CD4-positive, alpha-beta memory T cell (primary cell): ENCODE measurements at regions of chr19 and their contacts with region 1.

Region 1: GRCh38 chr19:55258828-55259539 is at the start of gene PPP6R1:
- DNase-seq: peak; percentile 94 to 98 (median 96)
- H3K4me3 ChIP-seq: peak within 1 kb of the TSS; percentile 79 to 92
- H3K4me3 Mint-ChIP-seq: peak within 1 kb of the TSS; percentile 93 to 100 (median 98)
- H3K27ac ChIP-seq: peak within 1 kb of the TSS; percentile 92
- H3K27ac Mint-ChIP-seq: peak within 1 kb of the TSS; percentile 97 to 100 (median 99)
- H3K4me1 ChIP-seq: peaks cover 44% of the 10 kb centered on the region
- H3K4me1 Mint-ChIP-seq: peaks cover 23 to 50% (median 38%) of the 10 kb centered on the region in 4 donors
- H3K27me3 ChIP-seq: no peaks in the 10 kb centered on the region
- H3K27me3 Mint-ChIP-seq: peaks cover 0 to 2% of the 10 kb centered on the region in 2 donors
- total RNA-seq, gene PPP6R1: 161 to 162 TPM

Region 2: GRCh38 chr19:54364775-54365257 is 894.2 kb before region 1 on chr19 and contains the start of gene LAIR1:
- CTCF ChIA-PET with region 1: no interaction called
- POLR2A ChIA-PET with region 1: no interaction called
- intact Hi-C with region 1: no loop called
- DNase-seq: peak in 4 of 5 donors; percentile 38 to 55 (median 39)
- H3K4me3 ChIP-seq: peak within 1 kb of the TSS; percentile 36 to 55
- H3K4me3 Mint-ChIP-seq: peak within 1 kb of the TSS; percentile 83 to 91 (median 89)
- H3K27ac ChIP-seq: peak within 1 kb of the TSS; percentile 42
- H3K27ac Mint-ChIP-seq: peak within 1 kb of the TSS; percentile 86 to 94 (median 91)
- H3K4me1 ChIP-seq: peaks cover 76% of the 10 kb centered on the region
- H3K4me1 Mint-ChIP-seq: peaks cover 48 to 87% (median 69%) of the 10 kb centered on the region in 4 donors
- H3K27me3 ChIP-seq: no peaks in the 10 kb centered on the region
- H3K27me3 Mint-ChIP-seq: no peaks in the 10 kb centered on the region
- total RNA-seq, gene LAIR1: 57.6 to 59.8 TPM

Region 3: DNA sequence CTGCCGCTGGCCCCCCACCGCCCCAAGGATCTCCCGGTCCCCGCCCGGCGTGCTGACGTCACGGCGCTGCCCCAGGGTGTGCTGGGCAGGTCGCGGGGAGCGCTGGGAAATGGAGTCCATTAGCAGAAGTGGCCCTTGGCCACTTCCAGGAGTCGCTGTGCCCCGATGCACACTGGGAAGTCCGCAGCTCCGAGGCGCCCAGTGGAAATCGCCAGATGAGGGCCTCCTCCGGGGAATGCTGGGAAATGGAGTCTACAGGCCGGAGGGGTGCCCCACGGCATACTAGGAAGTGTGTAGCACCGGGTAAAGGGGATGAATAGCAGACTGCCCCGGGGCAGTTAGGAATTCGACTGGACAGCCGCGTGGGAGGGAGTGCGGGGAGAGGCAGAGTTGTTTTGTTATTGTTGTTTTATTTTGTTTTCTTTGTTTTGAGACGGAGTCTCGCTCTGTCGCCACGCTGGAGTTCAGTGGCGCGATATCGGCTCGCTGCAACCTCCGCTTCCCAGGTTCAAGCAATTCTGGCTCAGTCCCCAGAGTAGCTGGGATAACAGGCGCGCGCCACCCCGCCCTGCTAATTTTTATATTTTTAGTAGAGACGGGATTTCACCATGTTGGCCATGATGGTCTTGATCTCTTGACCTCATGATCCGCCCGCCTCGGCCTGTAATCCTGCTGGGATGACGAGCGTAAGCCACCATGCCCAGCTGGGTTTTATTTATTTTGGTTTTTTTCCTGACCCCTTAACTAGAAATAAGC is 141.2 kb before region 1 on chr19 and contains the start of gene PPP1R12C:
- CTCF ChIA-PET with region 1: interaction called, 3 read pairs
- POLR2A ChIA-PET with region 1: interaction called, 10 read pairs
- intact Hi-C with region 1: loop called (anchors 5 kb)
- DNase-seq: peak; percentile 94 to 97 (median 96)
- H3K4me3 ChIP-seq: peak within 1 kb of the TSS; percentile 96 to 97
- H3K4me3 Mint-ChIP-seq: peak within 1 kb of the TSS; percentile 98 to 100 (median 99)
- H3K27ac ChIP-seq: peak within 1 kb of the TSS; percentile 73
- H3K27ac Mint-ChIP-seq: peak within 1 kb of the TSS; percentile 96 to 99 (median 98)
- H3K4me1 ChIP-seq: peaks cover 31% of the 10 kb centered on the region
- H3K4me1 Mint-ChIP-seq: peaks cover 15 to 53% (median 34%) of the 10 kb centered on the region in 4 donors
- H3K27me3 ChIP-seq: no peaks in the 10 kb centered on the region
- H3K27me3 Mint-ChIP-seq: peaks cover 3 to 6% of the 10 kb centered on the region in 2 donors
- total RNA-seq, gene PPP1R12C: 165 TPM

Region 4: GRCh38 chr19:55241143-55242088 is 17.6 kb before region 1 on chr19:
- CTCF ChIA-PET with region 1: interaction called, 3 read pairs
- POLR2A ChIA-PET with region 1: interaction called, 25 read pairs
- intact Hi-C with region 1: no loop called
- DNase-seq: no peak
- H3K4me3 ChIP-seq: no peak overlapping the region
- H3K4me3 Mint-ChIP-seq: no peak overlapping the region
- H3K27ac ChIP-seq: no peak overlapping the region
- H3K27ac Mint-ChIP-seq: no peak overlapping the region
- H3K4me1 ChIP-seq: no peaks in the 10 kb centered on the region
- H3K4me1 Mint-ChIP-seq: peaks cover 2 to 10% (median 4%) of the 10 kb centered on the region in 4 donors
- H3K27me3 ChIP-seq: no peaks in the 10 kb centered on the region
- H3K27me3 Mint-ChIP-seq: no peaks in the 10 kb centered on the region

Region 5: GRCh38 chr19:55289117-55289796 is 30.3 kb after region 1 on chr19:
- CTCF ChIA-PET with region 1: interaction called, 20 read pairs
- POLR2A ChIA-PET with region 1: interaction called, 199 read pairs
- intact Hi-C with region 1: loop called (anchors 1 kb)
- DNase-seq: no peak
- H3K4me3 ChIP-seq: no peak overlapping the region
- H3K4me3 Mint-ChIP-seq: no peak overlapping the region
- H3K27ac ChIP-seq: no peak overlapping the region
- H3K27ac Mint-ChIP-seq: no peak overlapping the region
- H3K4me1 ChIP-seq: peaks cover 6% of the 10 kb centered on the region
- H3K4me1 Mint-ChIP-seq: peaks cover 4 to 11% (median 8%) of the 10 kb centered on the region in 4 donors
- H3K27me3 ChIP-seq: no peaks in the 10 kb centered on the region
- H3K27me3 Mint-ChIP-seq: no peaks in the 10 kb centered on the region

Region 6: GRCh38 chr19:55385740-55386529 is 127.0 kb after region 1 on chr19 and contains the start of gene RPL28:
- CTCF ChIA-PET with region 1: interaction called, 4 read pairs
- POLR2A ChIA-PET with region 1: interaction called, 52 read pairs
- intact Hi-C with region 1: loop called (anchors 1 kb)
- DNase-seq: peak; percentile 98 to 100 (median 99)
- H3K4me3 ChIP-seq: peak within 1 kb of the TSS; percentile 85 to 88
- H3K4me3 Mint-ChIP-seq: peak within 1 kb of the TSS; percentile 99 to 100 (median 100)
- H3K27ac ChIP-seq: peak within 1 kb of the TSS; percentile 94
- H3K27ac Mint-ChIP-seq: peak within 1 kb of the TSS; percentile 98 to 100 (median 99)
- H3K4me1 ChIP-seq: peaks cover 68% of the 10 kb centered on the region
- H3K4me1 Mint-ChIP-seq: peaks cover 39 to 88% (median 63%) of the 10 kb centered on the region in 4 donors
- H3K27me3 ChIP-seq: no peaks in the 10 kb centered on the region
- H3K27me3 Mint-ChIP-seq: no peaks in the 10 kb centered on the region
- total RNA-seq, gene RPL28: 3,136 to 3,159 TPM

Region 7: GRCh38 chr19:55599468-55600279 is 340.7 kb after region 1 on chr19 and contains the start of gene FIZ1:
- CTCF ChIA-PET with region 1: no interaction called
- POLR2A ChIA-PET with region 1: interaction called, 7 read pairs
- intact Hi-C with region 1: loop called (anchors 1 kb)
- DNase-seq: peak; percentile 96 to 98 (median 97)
- H3K4me3 ChIP-seq: peak within 1 kb of the TSS; percentile 93 to 99
- H3K4me3 Mint-ChIP-seq: peak within 1 kb of the TSS; percentile 98 to 100 (median 98)
- H3K27ac ChIP-seq: peak within 1 kb of the TSS; percentile 89
- H3K27ac Mint-ChIP-seq: peak within 1 kb of the TSS; percentile 96 to 100 (median 99)
- H3K4me1 ChIP-seq: peaks cover 28% of the 10 kb centered on the region
- H3K4me1 Mint-ChIP-seq: peaks cover 22 to 38% (median 25%) of the 10 kb centered on the region in 4 donors
- H3K27me3 ChIP-seq: no peaks in the 10 kb centered on the region
- H3K27me3 Mint-ChIP-seq: no peaks in the 10 kb centered on the region
- total RNA-seq, gene FIZ1: 20.8 to 26.4 TPM